Upper lobe of right lung (tissue), 1 donor: ENCODE measurements at regions of chr2 and their contacts with region 1.

Region 1: DNA sequence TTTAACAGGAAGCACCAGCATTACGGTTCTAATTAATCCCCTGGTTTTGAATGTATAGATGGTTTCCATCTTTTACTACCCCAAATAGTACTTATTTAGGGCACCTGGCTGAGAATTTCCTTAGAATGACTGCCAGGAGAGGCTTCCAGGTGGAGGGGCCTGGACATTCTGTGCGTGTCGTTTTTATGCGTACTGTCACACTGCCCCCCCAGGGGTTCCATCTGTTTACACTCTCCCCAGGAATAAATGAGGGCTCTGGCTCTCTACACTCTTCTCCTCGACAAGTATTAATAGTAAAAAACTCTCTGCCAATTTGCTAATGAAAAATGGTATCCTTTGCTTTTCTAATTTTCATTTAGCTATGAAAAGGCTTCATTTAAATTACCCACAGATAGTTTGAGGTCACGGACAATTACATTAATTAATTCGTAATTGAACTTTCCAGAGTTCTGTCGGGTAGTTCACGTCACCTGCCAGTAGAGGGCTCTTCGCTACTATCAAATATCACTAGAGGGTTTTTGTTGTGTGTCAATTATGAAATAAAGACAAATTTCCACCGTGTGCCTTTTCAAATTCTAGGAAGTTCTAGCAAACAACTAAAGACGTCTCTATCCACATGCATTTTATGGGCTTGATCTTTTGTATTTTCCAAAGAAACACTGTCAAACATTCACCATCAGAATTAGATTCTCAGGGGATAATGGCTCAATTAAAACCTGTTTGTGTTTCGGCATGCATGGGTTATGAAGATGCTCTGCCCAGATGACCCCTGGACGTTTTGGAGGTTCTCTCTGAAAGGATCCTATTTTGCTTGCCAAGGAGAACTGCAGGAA is 88.8 kb upstream of the ASB18 start:
- DNase-seq: no peak
- ATAC-seq: peak; percentile 61
- H3K4me3 ChIP-seq: no peak overlapping the region
- H3K27ac ChIP-seq: no peak overlapping the region
- H3K4me1 ChIP-seq: no peaks in the 10 kb centered on the region
- H3K27me3 ChIP-seq: no peaks in the 10 kb centered on the region
- CTCF ChIP-seq: peak; percentile 89

Region 2: DNA sequence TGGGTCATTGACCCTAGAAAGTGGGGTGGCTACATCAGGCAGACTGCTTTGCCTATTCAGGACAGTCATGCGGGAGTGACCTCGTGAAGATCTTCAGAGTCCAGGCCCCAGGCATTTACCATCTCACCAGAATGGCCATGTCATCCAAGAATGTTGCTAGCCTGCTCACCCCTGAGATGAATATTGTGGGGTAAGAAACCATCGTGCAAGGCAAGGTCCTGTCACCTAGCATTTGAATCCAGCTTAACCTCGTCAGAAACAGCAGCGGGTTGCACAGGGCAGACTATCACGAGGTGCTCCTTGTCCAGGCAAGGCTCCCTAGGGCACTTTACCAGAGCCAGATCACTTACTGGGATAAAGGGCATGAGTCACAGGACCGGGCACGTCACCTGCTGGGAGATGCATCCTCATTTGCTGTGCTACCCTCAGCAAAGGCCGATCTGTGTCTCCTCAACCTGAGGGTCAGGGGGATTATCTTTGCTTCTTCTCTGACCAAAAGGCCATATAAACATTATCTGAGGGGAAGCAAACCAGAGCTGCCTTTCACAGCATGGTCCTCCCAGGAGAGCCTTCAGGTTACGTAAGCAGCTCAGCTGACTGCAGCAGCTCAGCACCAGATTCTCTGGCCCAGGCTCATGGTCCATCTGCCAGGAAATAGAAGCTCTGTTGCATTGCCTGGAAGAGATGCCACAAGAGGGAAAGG is 379.1 kb after region 1 on chr2:
- intact Hi-C with region 1: no loop called
- DNase-seq: no peak
- ATAC-seq: peak; percentile 70
- H3K4me3 ChIP-seq: no peak overlapping the region
- H3K27ac ChIP-seq: no peak overlapping the region
- H3K4me1 ChIP-seq: peaks cover 4% of the 10 kb centered on the region
- H3K27me3 ChIP-seq: no peaks in the 10 kb centered on the region
- CTCF ChIP-seq: no peak

Region 3: GRCh38 chr2:236794174-236794957 is 441.4 kb after region 1 on chr2:
- intact Hi-C with region 1: no loop called
- DNase-seq: no peak
- ATAC-seq: no peak
- H3K4me3 ChIP-seq: no peak overlapping the region
- H3K27ac ChIP-seq: no peak overlapping the region
- H3K4me1 ChIP-seq: no peaks in the 10 kb centered on the region
- H3K27me3 ChIP-seq: no peaks in the 10 kb centered on the region
- CTCF ChIP-seq: no peak

Region 4: GRCh38 chr2:237060534-237061312 is 707.7 kb after region 1 on chr2:
- intact Hi-C with region 1: loop called (anchors 5 kb)
- DNase-seq: no peak
- ATAC-seq: peak; percentile 75
- H3K4me3 ChIP-seq: no peak overlapping the region
- H3K27ac ChIP-seq: no peak overlapping the region
- H3K4me1 ChIP-seq: peaks cover 4% of the 10 kb centered on the region
- H3K27me3 ChIP-seq: no peaks in the 10 kb centered on the region
- CTCF ChIP-seq: peak; percentile 67

Region 5: DNA sequence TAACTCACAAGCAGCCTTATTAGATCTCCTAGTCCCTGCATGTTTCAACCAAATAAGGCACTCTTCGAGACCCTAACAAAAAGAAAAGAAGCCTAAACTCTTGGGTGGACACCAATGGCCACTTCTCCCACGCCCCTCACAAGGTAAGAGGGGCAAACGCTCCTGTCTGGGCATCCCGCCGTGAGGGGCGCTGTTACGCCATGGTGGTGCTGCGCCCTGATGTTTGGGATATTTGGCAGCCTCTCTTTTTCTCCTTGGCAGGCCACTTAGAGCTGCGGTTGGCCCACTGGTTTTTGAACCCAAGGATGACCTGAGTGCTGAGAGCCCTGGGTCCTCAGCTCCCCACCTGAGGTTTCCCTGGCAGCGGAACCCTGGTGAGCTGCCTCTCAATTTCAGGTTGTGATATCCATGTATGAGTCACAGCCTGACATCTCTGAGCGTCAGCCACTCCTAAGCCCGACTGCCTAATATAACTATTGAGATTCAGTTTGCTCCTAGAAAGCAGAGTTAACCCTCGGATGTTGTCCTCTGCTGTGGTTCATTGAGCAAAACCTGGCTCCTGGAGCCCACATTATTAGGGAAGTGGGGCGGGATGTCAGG is 957.6 kb after region 1 on chr2:
- intact Hi-C with region 1: no loop called
- DNase-seq: no peak
- ATAC-seq: no peak
- H3K4me3 ChIP-seq: no peak overlapping the region
- H3K27ac ChIP-seq: no peak overlapping the region
- H3K4me1 ChIP-seq: peaks cover 9% of the 10 kb centered on the region
- H3K27me3 ChIP-seq: no peaks in the 10 kb centered on the region
- CTCF ChIP-seq: no peak